ENCODE measurements at regions of chr3 and their contacts with region 1.

Region 1: DNA sequence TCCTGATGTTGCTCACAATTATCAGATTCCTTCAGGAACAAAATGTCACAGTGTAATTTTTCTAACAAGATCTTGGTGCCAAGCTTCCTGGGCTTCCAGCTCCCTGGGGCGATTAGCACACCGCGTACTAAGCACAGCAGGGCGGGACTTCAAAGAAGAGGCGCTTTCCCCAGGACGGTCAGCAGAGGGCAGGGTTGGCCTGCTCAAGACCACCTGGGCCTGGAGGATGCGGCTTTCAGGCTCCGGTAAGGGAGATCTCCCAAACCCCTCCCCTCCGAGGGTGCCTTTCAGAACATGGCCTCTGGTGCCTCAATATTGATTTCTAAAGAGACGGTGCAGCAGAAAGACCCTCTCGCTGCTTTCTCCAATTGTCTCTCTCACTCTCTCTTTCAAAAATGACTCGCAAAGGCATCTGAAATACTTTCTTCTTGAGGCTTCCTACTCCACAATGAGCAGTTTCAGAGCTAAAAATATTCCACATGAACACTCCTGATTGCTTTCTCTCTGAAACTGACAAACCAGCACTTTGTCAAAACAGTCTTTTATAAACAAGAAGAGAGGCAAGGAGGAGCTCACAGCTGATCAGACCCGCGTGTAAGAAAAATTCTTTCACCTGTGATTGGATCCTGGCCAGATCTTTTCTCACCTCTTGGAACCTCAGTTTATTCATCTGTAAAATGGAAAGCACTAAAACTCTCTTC is 154.0 kb downstream of the ADAMTS9 start:
- DNase-seq: peak; percentile 89
- ATAC-seq: peak; percentile 97

Region 2: GRCh38 chr3:64475037-64475436 is 58.7 kb before region 1 on chr3:
- intact Hi-C with region 1: no loop called
- DNase-seq: no peak
- ATAC-seq: no peak

Region 3: GRCh38 chr3:64977291-64978100 is 443.7 kb after region 1 on chr3:
- intact Hi-C with region 1: loop called (anchors 10 kb)
- DNase-seq: no peak
- ATAC-seq: peak; percentile 31

Region 4: DNA sequence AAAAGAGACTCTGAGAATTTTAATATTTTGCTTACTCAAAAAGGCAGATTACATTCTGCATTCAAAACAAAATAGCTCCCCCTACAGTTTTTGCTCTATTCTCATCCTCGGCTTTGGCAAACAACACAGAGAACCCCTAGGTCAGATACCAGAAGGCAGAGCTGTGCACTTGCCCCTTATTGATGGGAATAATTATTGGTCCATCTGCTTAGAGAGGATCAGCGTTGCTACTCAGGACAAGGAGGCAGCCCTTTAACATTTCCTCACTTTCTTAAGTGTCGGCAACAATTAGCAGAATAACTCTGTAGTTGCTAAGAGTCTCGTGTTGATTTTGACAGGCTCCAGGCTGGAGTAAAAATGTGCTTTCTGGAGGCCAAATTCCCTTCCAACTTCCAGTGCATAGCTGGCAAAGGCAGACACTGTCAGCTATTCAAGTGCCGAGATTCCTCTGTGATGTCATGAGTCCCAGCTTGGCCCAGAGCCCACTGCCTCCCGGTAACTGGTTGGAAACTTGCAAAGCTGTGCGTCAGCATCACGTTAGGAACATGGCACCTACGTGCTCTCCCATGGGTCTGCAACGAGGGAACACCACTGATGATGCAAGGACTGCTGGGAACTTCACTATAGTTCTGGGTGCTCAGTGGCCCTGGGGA is 636.7 kb after region 1 on chr3:
- intact Hi-C with region 1: loop called (anchors 5 kb)
- DNase-seq: peak; percentile 86
- ATAC-seq: peak; percentile 88

Region 5: DNA sequence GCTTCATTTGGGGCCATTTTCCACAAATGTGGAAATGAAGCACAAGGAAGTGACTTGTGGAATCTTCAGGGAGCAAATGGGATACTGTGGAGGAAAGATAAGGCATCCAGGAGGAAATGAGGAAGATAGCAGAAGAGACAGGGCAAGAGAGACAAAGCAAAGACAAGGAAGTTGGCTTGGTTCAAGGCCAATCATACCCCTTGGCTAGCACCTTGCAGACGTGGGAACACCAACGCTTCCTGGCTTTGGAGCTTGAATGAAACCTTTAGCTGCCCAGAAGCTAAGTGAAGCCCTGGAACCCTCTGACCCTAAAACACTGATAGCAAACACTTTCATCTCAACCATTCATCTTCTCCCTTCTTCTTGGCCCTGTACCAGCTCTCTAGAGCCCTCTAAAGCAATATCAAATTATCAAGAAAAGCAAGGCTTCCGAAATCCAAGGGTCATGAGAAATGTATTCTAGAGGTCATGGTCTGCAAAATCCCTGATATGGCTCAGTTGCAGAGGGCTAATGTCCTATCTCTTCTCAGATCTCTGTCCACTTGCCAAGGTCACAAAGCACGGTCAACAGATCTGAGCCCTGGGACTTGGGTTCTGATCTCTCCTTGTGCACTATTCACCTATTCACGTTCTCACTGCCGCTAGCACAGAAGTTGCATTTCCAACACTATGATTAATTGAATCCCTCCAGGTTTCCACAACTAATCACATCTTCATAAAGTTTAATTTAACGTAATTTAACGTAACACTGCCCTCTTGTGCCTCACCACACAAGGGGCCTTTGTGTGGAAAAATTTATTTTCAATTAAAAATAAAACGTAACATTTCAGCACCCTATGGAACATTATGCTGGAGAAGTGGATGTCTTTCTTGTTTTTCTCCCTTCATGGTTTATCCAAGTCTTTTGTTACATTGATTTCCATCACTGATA is 711.6 kb after region 1 on chr3:
- intact Hi-C with region 1: loop called (anchors 2 kb)
- DNase-seq: no peak
- ATAC-seq: no peak

Region 6: GRCh38 chr3:65412588-65412987 is 878.8 kb after region 1 on chr3:
- intact Hi-C with region 1: loop called (anchors 1 kb)
- DNase-seq: peak; percentile 68
- ATAC-seq: peak; percentile 92

Measured in Right ventricle myocardium inferior (tissue), 1 donor.